Caco-2 (cell line): ENCODE measurements at regions of chr3 and their contacts with region 1.

Region 1: GRCh38 chr3:19522305-19522704 is 374.0 kb downstream of the KCNH8 start:
- DNase-seq: no peak
- H3K4me3 ChIP-seq: no peak overlapping the region
- H3K4me3 Mint-ChIP-seq: no peak overlapping the region
- H3K27ac Mint-ChIP-seq: no peak overlapping the region
- H3K4me1 ChIP-seq: no peaks in the 10 kb centered on the region
- H3K4me1 Mint-ChIP-seq: no peaks in the 10 kb centered on the region
- H3K27me3 ChIP-seq: no peaks in the 10 kb centered on the region
- H3K27me3 Mint-ChIP-seq: peaks cover 8% of the 10 kb centered on the region
- CTCF ChIP-seq: no peak

Region 2: DNA sequence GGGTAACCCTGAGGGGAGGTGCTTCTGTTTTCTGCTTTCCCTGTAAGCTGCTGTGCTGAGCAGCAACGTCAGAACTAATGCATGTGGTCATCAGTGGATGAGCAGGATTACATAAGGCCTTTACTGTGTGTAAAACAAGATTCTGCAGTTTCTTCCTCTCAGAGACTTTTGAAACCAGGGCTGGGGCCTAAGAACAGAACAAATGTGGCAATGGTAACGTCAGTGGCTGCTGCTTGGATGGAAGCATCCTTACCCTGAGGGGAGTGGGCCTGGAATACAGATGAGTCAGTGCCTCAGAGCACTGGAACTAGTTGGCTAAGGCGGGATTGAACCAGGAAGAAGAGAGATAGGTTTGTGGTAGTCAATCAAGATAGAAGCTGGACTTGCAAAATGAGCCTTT is 554.2 kb before region 1 on chr3:
- CTCF ChIA-PET with region 1: no interaction called
- POLR2A ChIA-PET with region 1: no interaction called
- intact Hi-C with region 1: no loop called
- DNase-seq: no peak
- H3K4me3 ChIP-seq: no peak overlapping the region
- H3K4me3 Mint-ChIP-seq: no peak overlapping the region
- H3K27ac Mint-ChIP-seq: no peak overlapping the region
- H3K4me1 ChIP-seq: no peaks in the 10 kb centered on the region
- H3K4me1 Mint-ChIP-seq: peaks cover 5% of the 10 kb centered on the region
- H3K27me3 ChIP-seq: no peaks in the 10 kb centered on the region
- H3K27me3 Mint-ChIP-seq: no peaks in the 10 kb centered on the region
- CTCF ChIP-seq: no peak

Region 3: DNA sequence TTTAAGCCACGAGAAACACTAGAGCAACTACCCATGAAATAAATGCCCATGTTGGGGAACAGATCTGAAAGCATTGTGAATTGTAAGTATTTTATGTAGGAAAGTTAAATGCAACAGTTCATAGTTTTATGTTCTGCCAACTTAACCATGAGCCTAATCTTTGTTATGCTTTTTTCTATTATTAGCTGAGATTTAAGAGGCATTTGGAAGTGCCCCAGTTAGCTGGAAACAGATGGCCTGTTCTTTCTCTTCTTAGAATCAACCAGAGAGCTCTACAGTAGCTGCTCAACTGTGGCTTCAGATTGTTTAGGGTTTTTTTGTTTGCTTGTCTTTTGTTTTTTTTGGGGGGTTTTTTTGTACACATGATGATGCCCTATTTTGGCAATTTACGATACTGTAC is 89.6 kb before region 1 on chr3:
- CTCF ChIA-PET with region 1: no interaction called
- POLR2A ChIA-PET with region 1: no interaction called
- intact Hi-C with region 1: no loop called
- DNase-seq: no peak
- H3K4me3 ChIP-seq: no peak overlapping the region
- H3K4me3 Mint-ChIP-seq: no peak overlapping the region
- H3K27ac Mint-ChIP-seq: no peak overlapping the region
- H3K4me1 ChIP-seq: no peaks in the 10 kb centered on the region
- H3K4me1 Mint-ChIP-seq: no peaks in the 10 kb centered on the region
- H3K27me3 ChIP-seq: no peaks in the 10 kb centered on the region
- H3K27me3 Mint-ChIP-seq: no peaks in the 10 kb centered on the region
- CTCF ChIP-seq: no peak

Region 4: GRCh38 chr3:19473971-19474580 is 48.2 kb before region 1 on chr3:
- CTCF ChIA-PET with region 1: no interaction called
- POLR2A ChIA-PET with region 1: no interaction called
- intact Hi-C with region 1: loop called (anchors 1 kb)
- DNase-seq: no peak
- H3K4me3 ChIP-seq: no peak overlapping the region
- H3K4me3 Mint-ChIP-seq: no peak overlapping the region
- H3K27ac Mint-ChIP-seq: no peak overlapping the region
- H3K4me1 ChIP-seq: no peaks in the 10 kb centered on the region
- H3K4me1 Mint-ChIP-seq: no peaks in the 10 kb centered on the region
- H3K27me3 ChIP-seq: no peaks in the 10 kb centered on the region
- H3K27me3 Mint-ChIP-seq: no peaks in the 10 kb centered on the region
- CTCF ChIP-seq: no peak

Region 5: GRCh38 chr3:19489936-19490335 is 32.4 kb before region 1 on chr3:
- CTCF ChIA-PET with region 1: no interaction called
- POLR2A ChIA-PET with region 1: no interaction called
- intact Hi-C with region 1: no loop called
- DNase-seq: no peak
- H3K4me3 ChIP-seq: no peak overlapping the region
- H3K4me3 Mint-ChIP-seq: no peak overlapping the region
- H3K27ac Mint-ChIP-seq: no peak overlapping the region
- H3K4me1 ChIP-seq: no peaks in the 10 kb centered on the region
- H3K4me1 Mint-ChIP-seq: no peaks in the 10 kb centered on the region
- H3K27me3 ChIP-seq: no peaks in the 10 kb centered on the region
- H3K27me3 Mint-ChIP-seq: peaks cover 10% of the 10 kb centered on the region
- CTCF ChIP-seq: no peak